GM12878 (cell line): ENCODE measurements at regions of chr14 and their contacts with region 1.

Region 1: GRCh38 chr14:76876076-76876475 is 49.9 kb downstream of the LRRC74A start:
- DNase-seq: no peak
- ATAC-seq: peak; percentile 92
- H3K4me3 ChIP-seq: no peak overlapping the region
- H3K27ac ChIP-seq: no peak overlapping the region
- H3K4me1 ChIP-seq: no peaks in the 10 kb centered on the region
- H3K27me3 ChIP-seq: no peaks in the 10 kb centered on the region; a peak in 1 of 4 replicates
- CTCF ChIP-seq: peak; percentile 90 to 94 (median 92)
- EP300 ChIP-seq: no peak
- POLR2A ChIP-seq: no peak
- RAD21 ChIP-seq: peak; percentile 97

Region 2: GRCh38 chr14:76829650-76830421 is 46.2 kb before region 1 on chr14:
- CTCF ChIA-PET with region 1: no interaction called
- POLR2A ChIA-PET with region 1: no interaction called
- RAD21 ChIA-PET with region 1: no interaction called
- SMC1A ChIA-PET with region 1: no interaction called
- in situ Hi-C with region 1: no loop called
- intact Hi-C with region 1: no loop called
- DNase-seq: no peak
- ATAC-seq: no peak
- H3K4me3 ChIP-seq: no peak overlapping the region
- H3K27ac ChIP-seq: no peak overlapping the region
- H3K4me1 ChIP-seq: no peaks in the 10 kb centered on the region
- H3K27me3 ChIP-seq: peaks cover 0 to 3% of the 10 kb centered on the region in 2 experiments; a peak in 1 of 4 replicates
- CTCF ChIP-seq: no peak
- EP300 ChIP-seq: no peak
- POLR2A ChIP-seq: no peak
- RAD21 ChIP-seq: no peak

Region 3: DNA sequence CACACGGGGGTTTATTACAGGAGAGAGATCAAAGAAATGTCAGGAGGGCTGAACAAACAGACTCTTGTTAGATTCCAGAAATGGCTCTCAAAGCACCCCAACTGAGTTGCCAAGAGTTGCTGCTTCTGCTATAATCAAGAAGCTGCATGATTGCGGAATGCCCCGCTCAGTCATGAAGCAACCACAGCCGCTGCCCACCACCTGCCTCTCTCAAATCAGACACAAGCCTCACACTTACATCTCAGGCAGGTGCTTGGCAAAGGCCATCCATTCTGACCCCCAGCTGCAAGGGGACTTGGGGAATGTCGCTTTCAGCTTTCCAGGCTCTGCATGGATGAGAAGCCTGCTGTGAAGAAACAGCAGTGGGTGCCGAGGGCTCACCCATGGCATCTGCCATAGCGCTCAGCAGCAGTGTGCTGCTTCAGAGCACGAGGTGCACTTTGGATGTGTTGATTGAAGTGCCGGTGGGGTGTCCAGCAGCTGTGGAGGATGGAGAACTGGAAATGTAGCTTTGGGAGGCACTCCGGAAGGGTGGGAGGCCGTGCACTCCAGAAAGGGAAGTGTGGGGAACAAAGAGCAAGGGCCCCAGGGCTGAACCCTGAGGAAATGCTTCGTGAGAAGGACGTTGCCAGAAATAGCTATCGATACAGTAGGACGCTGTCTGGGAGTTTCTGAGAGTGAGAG is 12.2 kb before region 1 on chr14:
- CTCF ChIA-PET with region 1: interaction called, 12 read pairs
- POLR2A ChIA-PET with region 1: no interaction called
- RAD21 ChIA-PET with region 1: interaction called, 6 read pairs
- SMC1A ChIA-PET with region 1: interaction called, 3 read pairs
- in situ Hi-C with region 1: no loop called
- intact Hi-C with region 1: no loop called
- DNase-seq: peak; percentile 13
- ATAC-seq: peak; percentile 83
- H3K4me3 ChIP-seq: no peak overlapping the region
- H3K27ac ChIP-seq: peak overlapping the region; percentile 43
- H3K4me1 ChIP-seq: peaks cover 25% of the 10 kb centered on the region
- H3K27me3 ChIP-seq: no peaks in the 10 kb centered on the region
- CTCF ChIP-seq: no peak
- EP300 ChIP-seq: no peak
- POLR2A ChIP-seq: no peak
- RAD21 ChIP-seq: no peak

Region 4: GRCh38 chr14:76941946-76942805 is 66.1 kb after region 1 on chr14:
- CTCF ChIA-PET with region 1: interaction called, 13 read pairs
- POLR2A ChIA-PET with region 1: no interaction called
- RAD21 ChIA-PET with region 1: interaction called, 10 read pairs
- SMC1A ChIA-PET with region 1: interaction called, 9 read pairs
- in situ Hi-C with region 1: no loop called
- intact Hi-C with region 1: loop called (anchors 5 kb)
- DNase-seq: peak; percentile 72
- ATAC-seq: peak; percentile 29
- H3K4me3 ChIP-seq: no peak overlapping the region
- H3K27ac ChIP-seq: no peak overlapping the region
- H3K4me1 ChIP-seq: peaks cover 21% of the 10 kb centered on the region
- H3K27me3 ChIP-seq: no peaks in the 10 kb centered on the region
- CTCF ChIP-seq: no peak; a peak in 1 of 6 replicates
- EP300 ChIP-seq: no peak
- POLR2A ChIP-seq: no peak
- RAD21 ChIP-seq: no peak

Region 5: GRCh38 chr14:77040059-77040740 is 164.1 kb after region 1 on chr14:
- CTCF ChIA-PET with region 1: interaction called, 17 read pairs
- POLR2A ChIA-PET with region 1: no interaction called
- RAD21 ChIA-PET with region 1: interaction called, 8 read pairs
- SMC1A ChIA-PET with region 1: interaction called, 5 read pairs
- in situ Hi-C with region 1: no loop called
- intact Hi-C with region 1: no loop called
- DNase-seq: peak; percentile 99
- ATAC-seq: peak; percentile 75
- H3K4me3 ChIP-seq: peak overlapping the region; percentile 50
- H3K27ac ChIP-seq: peak overlapping the region; percentile 93
- H3K4me1 ChIP-seq: peaks cover 87% of the 10 kb centered on the region
- H3K27me3 ChIP-seq: no peaks in the 10 kb centered on the region
- CTCF ChIP-seq: no peak
- EP300 ChIP-seq: peak; percentile 42 to 61
- POLR2A ChIP-seq: peak; percentile 55; the same call in 1 of the 2 replicates
- RAD21 ChIP-seq: no peak

Region 6: GRCh38 chr14:77076113-77076631 is 200.1 kb after region 1 on chr14:
- CTCF ChIA-PET with region 1: interaction called, 848 read pairs
- POLR2A ChIA-PET with region 1: interaction called, 8 read pairs
- RAD21 ChIA-PET with region 1: interaction called, 498 read pairs
- SMC1A ChIA-PET with region 1: interaction called, 370 read pairs
- in situ Hi-C with region 1: no loop called
- intact Hi-C with region 1: no loop called
- DNase-seq: no peak
- ATAC-seq: no peak
- H3K4me3 ChIP-seq: no peak overlapping the region
- H3K27ac ChIP-seq: no peak overlapping the region
- H3K4me1 ChIP-seq: peaks cover 6% of the 10 kb centered on the region; the same call in 1 of the 2 replicates
- H3K27me3 ChIP-seq: no peaks in the 10 kb centered on the region
- CTCF ChIP-seq: no peak
- EP300 ChIP-seq: no peak
- POLR2A ChIP-seq: no peak
- RAD21 ChIP-seq: no peak

Region 7: GRCh38 chr14:77124345-77125280 is 248.5 kb after region 1 on chr14:
- CTCF ChIA-PET with region 1: interaction called, 79 read pairs
- POLR2A ChIA-PET with region 1: interaction called, 4 read pairs
- RAD21 ChIA-PET with region 1: interaction called, 22 read pairs
- SMC1A ChIA-PET with region 1: interaction called, 8 read pairs
- in situ Hi-C with region 1: no loop called
- intact Hi-C with region 1: no loop called
- DNase-seq: no peak
- ATAC-seq: peak; percentile 50
- H3K4me3 ChIP-seq: peak overlapping the region; percentile 48; the same call in 1 of the 2 replicates
- H3K27ac ChIP-seq: peak overlapping the region; percentile 4; the same call in 1 of the 2 replicates
- H3K4me1 ChIP-seq: peaks cover 49% of the 10 kb centered on the region
- H3K27me3 ChIP-seq: peaks cover 6 to 7% of the 10 kb centered on the region in 2 experiments; a peak in 2 of 4 replicates
- CTCF ChIP-seq: peak; percentile 33 to 61 (median 52); a peak in 4 of 6 replicates
- EP300 ChIP-seq: no peak
- POLR2A ChIP-seq: peak; percentile 45; the same call in 1 of the 2 replicates
- RAD21 ChIP-seq: peak; percentile 59; the same call in 1 of the 2 replicates

Region 8: DNA sequence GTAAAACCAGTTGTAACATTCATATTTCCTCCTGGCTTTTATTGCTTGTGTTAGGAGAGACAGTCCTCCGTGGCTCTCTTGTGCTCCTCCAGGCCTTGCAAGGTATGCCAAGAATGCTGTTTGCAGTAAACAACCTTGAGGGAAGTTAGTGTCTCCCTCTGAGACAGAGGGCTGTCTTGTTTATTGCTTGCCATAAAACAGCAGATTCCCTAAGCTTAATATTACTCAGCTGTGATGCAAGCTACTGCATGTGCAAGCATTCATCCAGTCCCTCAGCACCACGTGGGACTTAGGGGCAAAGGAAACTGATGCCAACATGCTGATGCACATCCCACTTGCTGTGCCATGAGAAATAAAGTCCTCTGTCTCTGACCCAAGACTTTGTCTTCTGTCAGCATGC is 438.0 kb after region 1 on chr14:
- CTCF ChIA-PET with region 1: interaction called, 23 read pairs
- POLR2A ChIA-PET with region 1: no interaction called
- RAD21 ChIA-PET with region 1: interaction called, 16 read pairs
- SMC1A ChIA-PET with region 1: interaction called, 14 read pairs
- in situ Hi-C with region 1: no loop called
- intact Hi-C with region 1: loop called (anchors 5 kb)
- DNase-seq: no peak
- ATAC-seq: no peak
- H3K4me3 ChIP-seq: no peak overlapping the region
- H3K27ac ChIP-seq: no peak overlapping the region
- H3K4me1 ChIP-seq: no peaks in the 10 kb centered on the region
- H3K27me3 ChIP-seq: no peaks in the 10 kb centered on the region
- CTCF ChIP-seq: no peak
- EP300 ChIP-seq: no peak
- POLR2A ChIP-seq: no peak
- RAD21 ChIP-seq: no peak